OCI-LY7 (cell line): ENCODE measurements at regions of chr7 and their contacts with region 1.

Region 1: GRCh38 chr7:101764221-101764620 is 53.2 kb upstream of the CUX1 start:
- DNase-seq: no peak
- H3K4me3 ChIP-seq: no peak overlapping the region
- H3K27ac ChIP-seq: no peak overlapping the region
- H3K4me1 ChIP-seq: no peaks in the 10 kb centered on the region
- CTCF ChIP-seq: no peak

Region 2: GRCh38 chr7:101118827-101119226 is 645.4 kb before region 1 on chr7:
- CTCF ChIA-PET with region 1: no interaction called
- POLR2A ChIA-PET with region 1: interaction called, 11 read pairs
- intact Hi-C with region 1: no loop called
- DNase-seq: no peak
- H3K4me3 ChIP-seq: no peak overlapping the region
- H3K27ac ChIP-seq: no peak overlapping the region
- H3K4me1 ChIP-seq: no peaks in the 10 kb centered on the region
- CTCF ChIP-seq: no peak